A673 (cell line): ENCODE measurements at regions of chr4 and their contacts with region 1.

Region 1: GRCh38 chr4:46270986-46271596 is 118.8 kb downstream of the GABRA2 start:
- DNase-seq: peak; percentile 70
- H3K4me3 ChIP-seq: no peak overlapping the region
- H3K27ac ChIP-seq: no peak overlapping the region
- H3K4me1 ChIP-seq: no peaks in the 10 kb centered on the region
- H3K27me3 ChIP-seq: peaks cover 8% of the 10 kb centered on the region
- CTCF ChIP-seq: peak; percentile 68

Region 2: DNA sequence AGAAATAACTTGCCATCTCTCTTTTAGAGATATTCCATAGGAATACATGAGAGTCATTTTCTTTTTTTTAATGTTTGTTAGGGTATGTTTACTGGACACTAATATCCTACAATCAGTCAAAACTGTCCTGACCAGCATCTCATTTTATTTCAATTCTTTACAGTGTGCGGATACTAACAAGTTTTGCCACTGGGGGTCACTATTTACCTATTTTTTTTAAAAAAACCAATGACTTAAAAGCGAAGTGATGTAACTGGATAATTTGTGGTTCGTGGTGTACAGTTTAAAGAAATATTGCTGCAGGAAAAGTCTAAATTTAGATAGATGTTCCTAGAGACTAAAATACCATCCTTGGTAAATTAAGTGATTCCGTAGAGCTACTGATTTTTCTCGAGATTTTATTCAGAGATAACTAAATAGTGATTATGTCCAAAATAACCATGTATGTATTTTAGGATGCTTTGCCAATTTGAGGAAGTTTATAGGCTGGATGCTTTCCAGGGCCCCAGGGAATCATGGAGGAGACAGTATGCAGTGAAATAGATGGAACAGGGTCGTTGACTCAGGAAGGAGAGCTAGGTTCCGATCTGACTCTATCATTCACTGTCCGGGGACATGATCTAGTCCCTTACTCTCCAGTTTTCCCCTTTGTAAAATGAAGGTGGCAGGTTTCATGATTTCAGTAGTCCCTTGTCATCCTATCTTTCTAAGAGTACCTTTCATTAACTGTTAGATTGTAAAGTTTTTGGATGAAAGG is 1510.8 kb before region 1 on chr4:
- CTCF ChIA-PET with region 1: no interaction called
- POLR2A ChIA-PET with region 1: no interaction called
- intact Hi-C with region 1: loop called (anchors 5 kb)
- DNase-seq: peak; percentile 70
- H3K4me3 ChIP-seq: no peak overlapping the region
- H3K27ac ChIP-seq: no peak overlapping the region
- H3K4me1 ChIP-seq: no peaks in the 10 kb centered on the region
- H3K27me3 ChIP-seq: no peaks in the 10 kb centered on the region
- CTCF ChIP-seq: peak; percentile 65

Region 3: DNA sequence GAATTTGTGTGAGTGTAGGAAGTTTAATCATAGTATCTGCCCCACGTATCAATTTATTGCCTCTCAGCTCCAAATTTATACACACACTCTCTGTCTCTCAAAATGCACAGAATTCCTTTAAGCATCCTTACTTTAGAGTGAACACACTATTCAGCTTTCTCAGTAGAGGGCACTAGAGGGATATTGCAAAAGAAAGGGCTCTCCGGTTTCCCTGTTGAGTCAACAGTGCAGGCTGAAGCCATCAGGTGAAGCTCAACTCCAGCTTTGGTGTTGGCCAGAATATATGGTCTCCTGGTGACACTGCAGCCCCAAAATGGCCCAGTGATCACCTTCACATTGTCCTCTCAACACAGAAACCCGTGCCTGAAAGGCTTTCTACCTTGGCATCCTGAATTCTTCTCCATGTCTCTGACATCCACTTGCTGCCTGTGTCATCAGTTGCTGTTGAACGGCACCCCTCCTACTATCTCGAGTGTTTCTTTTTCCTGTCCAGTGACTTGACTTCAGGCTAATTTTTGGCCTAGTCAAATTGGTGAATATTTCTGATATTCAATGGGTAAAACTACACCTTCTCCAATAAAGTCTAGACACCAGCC is 817.7 kb before region 1 on chr4:
- CTCF ChIA-PET with region 1: no interaction called
- POLR2A ChIA-PET with region 1: no interaction called
- intact Hi-C with region 1: loop called (anchors 1 kb)
- DNase-seq: peak; percentile 59
- H3K4me3 ChIP-seq: no peak overlapping the region
- H3K27ac ChIP-seq: no peak overlapping the region
- H3K4me1 ChIP-seq: no peaks in the 10 kb centered on the region
- H3K27me3 ChIP-seq: no peaks in the 10 kb centered on the region
- CTCF ChIP-seq: peak; percentile 69

Region 4: GRCh38 chr4:45944000-45944399 is 327.1 kb before region 1 on chr4:
- CTCF ChIA-PET with region 1: no interaction called
- POLR2A ChIA-PET with region 1: no interaction called
- intact Hi-C with region 1: loop called (anchors 2 kb)
- DNase-seq: peak; percentile 17
- H3K4me3 ChIP-seq: no peak overlapping the region
- H3K27ac ChIP-seq: no peak overlapping the region
- H3K4me1 ChIP-seq: no peaks in the 10 kb centered on the region
- H3K27me3 ChIP-seq: no peaks in the 10 kb centered on the region
- CTCF ChIP-seq: peak; percentile 47

Region 5: DNA sequence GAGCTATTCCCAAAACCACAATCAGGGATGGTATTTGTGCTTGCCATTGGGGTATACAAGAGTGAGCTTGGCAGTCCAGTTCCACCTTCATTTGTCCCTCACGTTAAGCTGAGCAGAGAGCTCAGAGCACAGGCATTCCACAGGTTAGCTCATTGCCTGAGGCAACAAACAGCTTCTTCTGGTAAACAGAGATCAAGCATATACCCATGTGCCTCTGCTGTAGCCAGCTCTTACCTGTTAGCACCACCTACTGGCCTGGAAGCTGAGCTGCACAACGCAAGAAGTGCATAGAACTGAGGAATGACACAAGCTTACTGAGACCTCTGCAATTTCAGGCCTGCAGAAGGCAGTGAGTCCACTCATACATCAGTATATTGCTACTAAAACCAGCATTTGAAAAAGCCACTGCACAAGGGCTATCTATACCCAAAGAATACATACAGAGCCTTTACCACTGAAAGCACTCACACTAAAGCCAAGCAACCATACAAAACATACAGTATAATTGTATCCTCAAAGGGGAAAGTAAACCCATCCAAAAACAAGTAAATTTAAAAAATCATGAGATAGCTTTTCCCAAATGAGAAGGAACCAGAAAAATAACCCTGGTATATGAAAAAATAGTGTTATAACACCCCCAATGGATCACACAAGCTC is 377.1 kb after region 1 on chr4:
- CTCF ChIA-PET with region 1: no interaction called
- POLR2A ChIA-PET with region 1: no interaction called
- intact Hi-C with region 1: loop called (anchors 5 kb)
- DNase-seq: peak; percentile 64
- H3K4me3 ChIP-seq: no peak overlapping the region
- H3K27ac ChIP-seq: no peak overlapping the region
- H3K4me1 ChIP-seq: no peaks in the 10 kb centered on the region
- H3K27me3 ChIP-seq: peaks cover 12% of the 10 kb centered on the region
- CTCF ChIP-seq: peak; percentile 78